AG04450 (cell line): ENCODE measurements at regions of chr3 and their contacts with region 1.

Region 1: DNA sequence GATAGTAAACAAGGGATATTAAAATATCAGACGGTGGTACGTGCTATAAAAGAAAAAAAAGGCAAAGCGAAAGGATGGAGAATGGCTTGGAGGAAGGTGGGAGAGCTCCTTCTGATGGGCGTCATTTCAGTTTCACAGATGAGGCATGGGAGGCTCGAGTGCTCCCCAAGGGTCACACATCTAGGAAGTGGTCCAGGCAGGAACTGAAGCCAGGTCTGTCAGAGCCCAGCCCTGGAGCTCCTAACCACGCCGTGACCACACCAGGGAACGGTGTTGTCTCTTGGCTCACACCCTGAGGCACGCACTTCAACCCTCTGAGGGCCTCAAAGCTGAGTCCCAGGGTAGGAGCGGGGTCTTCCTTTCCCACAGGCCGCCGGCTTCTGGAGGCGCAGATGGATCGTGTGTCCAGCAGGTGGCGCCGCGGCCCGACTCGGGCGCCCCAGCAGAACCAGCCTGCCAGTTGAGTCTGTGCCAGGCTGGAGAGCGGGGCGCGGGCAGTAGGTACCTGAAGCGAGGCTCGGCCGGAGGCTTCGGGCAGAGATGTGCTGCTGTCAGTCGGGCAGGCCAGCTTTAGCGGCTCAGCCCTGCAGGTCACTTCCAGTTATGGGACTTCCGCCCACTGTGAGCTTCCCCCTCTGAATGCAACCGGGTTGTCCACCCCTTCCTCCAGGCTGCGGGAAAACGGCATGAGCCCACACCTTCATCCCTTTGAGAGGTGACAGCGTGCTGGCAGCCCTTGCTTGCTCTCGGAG is 68.1 kb downstream of the SLC6A1 start:
- DNase-seq: peak; percentile 23
- H3K4me3 ChIP-seq: peak overlapping the region; percentile 20; the same call in 1 of the 2 replicates
- H3K27ac ChIP-seq: no peak overlapping the region
- H3K27me3 ChIP-seq: peaks cover 8% of the 10 kb centered on the region
- CTCF ChIP-seq: peak; percentile 85

Region 2: DNA sequence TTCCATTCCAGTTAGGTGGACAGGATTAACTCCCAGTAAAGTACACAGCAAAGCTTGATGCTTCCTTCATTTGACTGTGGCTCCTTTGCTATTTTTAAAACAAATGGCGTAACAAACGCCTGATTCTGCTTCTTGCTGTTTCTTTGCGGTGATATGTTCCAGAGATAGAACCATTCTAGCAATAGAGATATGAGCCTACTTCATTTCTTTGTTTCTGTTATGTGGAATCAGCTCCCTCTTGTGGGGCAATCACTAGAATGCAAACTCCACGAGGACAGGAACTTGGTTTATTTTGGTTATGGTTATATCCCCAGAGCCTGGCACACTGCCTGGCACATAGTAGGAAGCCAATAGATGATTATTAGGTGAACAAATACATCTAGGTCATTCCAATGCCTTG is 367.2 kb before region 1 on chr3:
- CTCF ChIA-PET with region 1: no interaction called
- POLR2A ChIA-PET with region 1: no interaction called
- DNase-seq: no peak
- H3K4me3 ChIP-seq: no peak overlapping the region
- H3K27ac ChIP-seq: no peak overlapping the region
- H3K27me3 ChIP-seq: peaks cover 5% of the 10 kb centered on the region
- CTCF ChIP-seq: no peak

Region 3: GRCh38 chr3:10758304-10759061 is 302.2 kb before region 1 on chr3:
- CTCF ChIA-PET with region 1: interaction called, 104 read pairs
- POLR2A ChIA-PET with region 1: no interaction called
- DNase-seq: peak; percentile 36
- H3K4me3 ChIP-seq: no peak overlapping the region
- H3K27ac ChIP-seq: no peak overlapping the region
- H3K27me3 ChIP-seq: no peaks in the 10 kb centered on the region
- CTCF ChIP-seq: peak; percentile 68

Region 4: GRCh38 chr3:11037241-11037873 is 23.3 kb before region 1 on chr3:
- CTCF ChIA-PET with region 1: interaction called, 12 read pairs
- POLR2A ChIA-PET with region 1: no interaction called
- DNase-seq: no peak
- H3K4me3 ChIP-seq: no peak overlapping the region
- H3K27ac ChIP-seq: no peak overlapping the region
- H3K27me3 ChIP-seq: peaks cover 14% of the 10 kb centered on the region
- CTCF ChIP-seq: no peak

Region 5: GRCh38 chr3:11096266-11097135 is 35.8 kb after region 1 on chr3:
- CTCF ChIA-PET with region 1: interaction called, 26 read pairs
- POLR2A ChIA-PET with region 1: no interaction called
- DNase-seq: peak; percentile 69
- H3K4me3 ChIP-seq: peak overlapping the region; percentile 56
- H3K27ac ChIP-seq: peak overlapping the region; percentile 96
- H3K27me3 ChIP-seq: no peaks in the 10 kb centered on the region
- CTCF ChIP-seq: no peak

Region 6: DNA sequence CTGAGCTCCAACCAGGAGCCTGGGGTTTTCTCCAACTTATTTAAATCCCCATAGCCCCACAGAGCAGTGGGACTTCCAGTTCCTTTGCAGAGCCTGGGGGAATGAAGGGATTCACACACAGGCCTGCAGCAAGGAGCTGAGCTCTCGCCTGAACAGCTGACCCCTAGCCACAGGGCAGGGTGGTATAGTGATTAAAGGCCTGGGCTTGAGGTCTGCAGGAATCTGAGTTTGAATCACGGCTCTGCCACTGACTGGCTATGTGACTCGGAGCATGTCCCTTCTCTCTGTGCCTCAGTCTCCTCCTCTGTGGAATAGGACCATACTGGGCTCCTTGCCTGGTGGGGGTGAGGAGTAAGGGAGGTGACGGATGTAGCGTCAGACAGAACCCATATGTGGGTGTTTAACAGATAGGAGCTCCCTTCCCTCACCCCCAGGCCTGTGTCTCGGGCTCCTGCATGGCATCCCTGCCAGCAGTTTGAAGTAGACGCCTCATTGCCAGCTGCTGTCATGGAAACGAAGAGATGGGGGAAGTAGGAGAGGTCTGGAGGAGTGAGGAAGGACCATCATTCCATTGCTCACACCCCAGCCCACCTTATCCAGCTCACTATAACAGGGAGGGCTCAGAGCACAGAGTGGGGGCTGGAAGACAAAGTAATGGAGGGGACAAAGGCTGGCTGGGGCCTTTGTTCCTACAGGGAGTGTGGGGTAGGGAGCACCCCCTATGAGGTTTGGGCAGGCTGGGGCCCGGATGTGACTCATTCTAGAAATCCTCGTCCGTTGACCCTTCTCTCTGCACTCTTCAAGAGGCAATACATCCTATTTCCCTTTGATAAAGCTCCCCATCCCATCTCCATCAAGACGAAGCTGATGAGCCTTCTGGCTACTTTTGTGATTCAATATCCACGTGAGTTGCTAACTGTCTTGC is 108.5 kb after region 1 on chr3:
- CTCF ChIA-PET with region 1: interaction called, 14 read pairs
- POLR2A ChIA-PET with region 1: no interaction called
- DNase-seq: peak; percentile 32
- H3K4me3 ChIP-seq: no peak overlapping the region
- H3K27ac ChIP-seq: peak overlapping the region; percentile 94
- H3K27me3 ChIP-seq: no peaks in the 10 kb centered on the region
- CTCF ChIP-seq: no peak

Region 7: GRCh38 chr3:11221818-11222415 is 161.2 kb after region 1 on chr3:
- CTCF ChIA-PET with region 1: interaction called, 10 read pairs
- POLR2A ChIA-PET with region 1: no interaction called
- DNase-seq: no peak
- H3K4me3 ChIP-seq: no peak overlapping the region
- H3K27ac ChIP-seq: no peak overlapping the region
- H3K27me3 ChIP-seq: no peaks in the 10 kb centered on the region
- CTCF ChIP-seq: peak; percentile 23; the same call in 1 of the 2 replicates

Region 8: DNA sequence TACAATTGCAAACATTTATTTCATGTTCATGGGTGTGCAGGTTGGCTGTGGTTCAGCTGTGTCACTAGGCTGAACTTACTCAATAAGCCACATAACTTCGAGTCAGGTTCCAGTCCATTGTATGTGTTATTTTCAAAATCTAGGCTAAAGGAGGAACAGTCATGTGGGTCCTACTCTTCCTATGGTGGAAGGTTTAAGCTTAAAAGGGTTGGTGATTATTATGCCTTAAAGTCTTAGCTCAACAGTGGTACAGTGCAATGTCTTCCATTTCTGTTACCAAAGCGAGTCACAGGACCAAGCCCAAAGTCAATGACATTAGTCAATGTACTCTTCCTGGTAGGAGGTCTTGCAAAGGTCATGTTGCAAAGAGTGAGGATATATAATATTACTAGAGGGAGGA is 289.7 kb after region 1 on chr3:
- CTCF ChIA-PET with region 1: interaction called, 12 read pairs
- POLR2A ChIA-PET with region 1: no interaction called
- DNase-seq: no peak
- H3K4me3 ChIP-seq: no peak overlapping the region
- H3K27ac ChIP-seq: peak overlapping the region; percentile 49
- H3K27me3 ChIP-seq: no peaks in the 10 kb centered on the region
- CTCF ChIP-seq: no peak